ENCODE measurements at regions of chr7 and their contacts with region 1.

Region 1: GRCh38 chr7:151368136-151368571 is 26.5 kb downstream of the NUB1 start:
- DNase-seq: no peak
- H3K4me3 ChIP-seq: no peak overlapping the region
- H3K27ac ChIP-seq: peak overlapping the region in 1 of 4 donors; percentile 60
- H3K4me1 ChIP-seq: peaks cover 0 to 21% (median 3%) of the 10 kb centered on the region in 3 donors
- H3K27me3 ChIP-seq: no peaks in the 10 kb centered on the region
- CTCF ChIP-seq: peak; percentile 87 to 95 (median 92)
- POLR2A ChIP-seq: no peak

Region 2: GRCh38 chr7:151448261-151449252 is 80.4 kb after region 1 on chr7:
- intact Hi-C with region 1: loop called (anchors 2 kb)
- DNase-seq: no peak
- H3K4me3 ChIP-seq: peak overlapping the region; percentile 40 to 66 (median 52)
- H3K27ac ChIP-seq: peak overlapping the region; percentile 32 to 67 (median 62)
- H3K4me1 ChIP-seq: peaks cover 5 to 17% (median 6%) of the 10 kb centered on the region in 3 donors
- H3K27me3 ChIP-seq: peaks cover 0 to 17% (median 0%) of the 10 kb centered on the region in 4 donors
- CTCF ChIP-seq: peak; percentile 66 to 77 (median 75)
- POLR2A ChIP-seq: no peak

Region 3: GRCh38 chr7:151759591-151760042 is 391.5 kb after region 1 on chr7:
- intact Hi-C with region 1: loop called (anchors 10 kb)
- DNase-seq: no peak
- H3K4me3 ChIP-seq: no peak overlapping the region
- H3K27ac ChIP-seq: no peak overlapping the region
- H3K4me1 ChIP-seq: peaks cover 6 to 61% (median 40%) of the 10 kb centered on the region in 3 donors
- H3K27me3 ChIP-seq: no peaks in the 10 kb centered on the region
- CTCF ChIP-seq: peak; percentile 59 to 89 (median 82)
- POLR2A ChIP-seq: no peak